ENCODE measurements at regions of chr1 and their contacts with region 1.

Region 1: DNA sequence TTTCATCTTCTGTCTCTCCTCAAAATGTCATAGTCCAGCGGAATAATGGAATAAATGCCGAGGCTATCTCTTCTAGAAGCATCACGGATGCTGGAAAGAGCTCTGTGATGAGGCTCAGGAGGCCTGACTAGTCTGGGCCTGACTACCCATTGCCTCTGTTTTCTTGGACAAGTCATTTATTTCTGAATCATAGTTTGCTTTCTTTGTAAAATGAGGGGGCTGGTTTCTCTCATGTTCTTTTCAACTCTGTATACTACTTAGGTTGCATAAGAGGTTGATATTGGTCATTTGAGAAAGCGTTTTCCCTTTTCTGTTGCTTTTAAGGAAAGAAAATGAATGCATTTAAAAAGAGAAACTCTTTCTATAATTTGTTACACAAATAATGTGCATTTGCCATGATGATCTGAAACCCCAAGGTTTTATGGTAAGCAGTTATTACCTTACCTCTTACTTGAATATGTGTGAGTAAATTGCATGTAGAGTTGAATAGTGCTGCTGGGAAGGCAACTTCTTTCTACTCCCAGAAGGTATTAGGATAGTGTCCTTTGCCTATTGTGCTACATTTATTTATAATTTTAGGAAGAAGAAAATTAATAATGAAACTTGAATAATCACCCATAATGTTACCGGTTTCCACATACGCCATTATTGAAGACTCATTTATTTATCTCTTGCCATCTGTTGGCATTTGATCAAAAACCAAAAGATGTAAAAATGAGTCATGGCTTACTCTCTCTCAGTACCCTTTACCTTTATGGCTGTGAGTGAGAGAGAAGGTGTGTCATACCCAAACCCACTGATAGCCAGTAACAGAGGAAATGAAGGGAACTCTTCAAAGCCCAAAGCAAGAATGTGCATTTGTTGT is 179.1 kb downstream of the FASLG start:
- DNase-seq: peak in 7 of 9 donors; percentile 47 to 78 (median 72)
- ATAC-seq: peak; percentile 99
- H3K4me3 ChIP-seq: no peak overlapping the region
- H3K4me3 Mint-ChIP-seq: peak overlapping the region in 9 of 10 donors; percentile 20 to 59 (median 41)
- H3K27ac ChIP-seq: no peak overlapping the region
- H3K27ac Mint-ChIP-seq: peak overlapping the region in 7 of 9 donors; percentile 63 to 92 (median 78)
- H3K4me1 ChIP-seq: peaks cover 12 to 16% of the 10 kb centered on the region in 2 donors
- H3K4me1 Mint-ChIP-seq: peaks cover 3 to 36% (median 28%) of the 10 kb centered on the region in 7 donors
- H3K27me3 ChIP-seq: no peaks in the 10 kb centered on the region
- H3K27me3 Mint-ChIP-seq: peaks cover 0 to 59% (median 0%) of the 10 kb centered on the region in 5 donors

Region 2: GRCh38 chr1:171883849-171884248 is 954.2 kb before region 1 on chr1:
- CTCF ChIA-PET with region 1: no interaction called
- POLR2A ChIA-PET with region 1: no interaction called
- intact Hi-C with region 1: no loop called
- DNase-seq: no peak
- ATAC-seq: no peak
- H3K4me3 ChIP-seq: no peak overlapping the region
- H3K4me3 Mint-ChIP-seq: peak overlapping the region in 2 of 10 donors; percentile 15 to 49
- H3K27ac ChIP-seq: no peak overlapping the region
- H3K27ac Mint-ChIP-seq: peak overlapping the region in 3 of 9 donors; percentile 16 to 62 (median 25)
- H3K4me1 ChIP-seq: no peaks in the 10 kb centered on the region
- H3K4me1 Mint-ChIP-seq: peaks cover 6 to 15% (median 9%) of the 10 kb centered on the region in 7 donors
- H3K27me3 ChIP-seq: no peaks in the 10 kb centered on the region
- H3K27me3 Mint-ChIP-seq: peaks cover 0 to 2% (median 0%) of the 10 kb centered on the region in 5 donors

Region 3: GRCh38 chr1:172818841-172819527 is 19.1 kb before region 1 on chr1:
- CTCF ChIA-PET with region 1: no interaction called
- POLR2A ChIA-PET with region 1: no interaction called
- intact Hi-C with region 1: loop called in 1 of 2 experiments (anchors 2 kb)
- DNase-seq: peak in 6 of 9 donors; percentile 7 to 44 (median 12)
- ATAC-seq: peak; percentile 81
- H3K4me3 ChIP-seq: peak overlapping the region; percentile 40
- H3K4me3 Mint-ChIP-seq: peak overlapping the region; percentile 63 to 79 (median 72)
- H3K27ac ChIP-seq: peak overlapping the region; percentile 53
- H3K27ac Mint-ChIP-seq: peak overlapping the region; percentile 76 to 93 (median 84)
- H3K4me1 ChIP-seq: peaks cover 6 to 17% of the 10 kb centered on the region in 2 donors
- H3K4me1 Mint-ChIP-seq: peaks cover 29 to 56% (median 36%) of the 10 kb centered on the region in 7 donors
- H3K27me3 ChIP-seq: no peaks in the 10 kb centered on the region
- H3K27me3 Mint-ChIP-seq: peaks cover 0 to 14% (median 0%) of the 10 kb centered on the region in 5 donors

Region 4: DNA sequence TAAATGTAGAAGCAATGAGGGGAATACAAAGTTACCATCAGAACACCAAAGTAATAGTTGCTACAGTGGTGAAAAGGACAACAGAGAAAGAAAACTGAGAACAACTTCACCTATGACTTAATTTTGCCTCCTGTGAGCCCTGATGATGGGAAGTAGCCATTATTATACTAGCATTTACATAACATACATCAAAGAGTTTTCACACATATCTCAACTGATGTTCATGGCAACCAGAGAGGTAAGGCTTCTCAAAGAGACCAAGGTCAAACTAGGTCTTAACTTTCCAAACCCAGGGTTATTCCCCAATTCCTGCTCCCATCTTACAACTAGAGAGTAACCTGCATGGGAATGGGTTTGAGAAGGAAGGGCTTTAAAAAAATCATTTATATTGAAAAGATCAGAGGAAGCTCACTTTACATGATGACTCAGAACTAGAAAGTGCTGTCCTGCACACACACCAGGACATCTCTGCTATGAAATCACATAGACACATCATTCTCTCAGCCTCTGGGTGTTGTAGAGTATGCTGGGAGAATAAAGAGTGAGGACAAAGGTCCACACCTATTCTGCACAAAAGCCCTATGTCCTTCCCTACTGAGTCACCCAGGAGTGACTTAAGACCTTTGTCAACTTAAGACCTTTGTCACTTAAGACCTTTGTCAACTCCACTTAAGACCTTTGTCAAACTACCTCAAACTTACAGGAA is 33.0 kb after region 1 on chr1:
- CTCF ChIA-PET with region 1: no interaction called
- POLR2A ChIA-PET with region 1: interaction called, 3 read pairs
- intact Hi-C with region 1: loop called (anchors 1 kb)
- DNase-seq: no peak
- ATAC-seq: no peak
- H3K4me3 ChIP-seq: no peak overlapping the region
- H3K4me3 Mint-ChIP-seq: no peak overlapping the region
- H3K27ac ChIP-seq: no peak overlapping the region
- H3K27ac Mint-ChIP-seq: no peak overlapping the region
- H3K4me1 ChIP-seq: peaks cover 0 to 9% of the 10 kb centered on the region in 2 donors
- H3K4me1 Mint-ChIP-seq: peaks cover 5 to 36% (median 26%) of the 10 kb centered on the region in 7 donors
- H3K27me3 ChIP-seq: no peaks in the 10 kb centered on the region
- H3K27me3 Mint-ChIP-seq: peaks cover 0 to 44% (median 0%) of the 10 kb centered on the region in 5 donors

Region 5: GRCh38 chr1:173392895-173393658 is 555.0 kb after region 1 on chr1:
- CTCF ChIA-PET with region 1: no interaction called
- POLR2A ChIA-PET with region 1: no interaction called
- intact Hi-C with region 1: no loop called
- DNase-seq: no peak
- ATAC-seq: no peak
- H3K4me3 ChIP-seq: no peak overlapping the region
- H3K4me3 Mint-ChIP-seq: no peak overlapping the region
- H3K27ac ChIP-seq: no peak overlapping the region
- H3K27ac Mint-ChIP-seq: no peak overlapping the region
- H3K4me1 ChIP-seq: no peaks in the 10 kb centered on the region
- H3K4me1 Mint-ChIP-seq: no peaks in the 10 kb centered on the region
- H3K27me3 ChIP-seq: no peaks in the 10 kb centered on the region
- H3K27me3 Mint-ChIP-seq: no peaks in the 10 kb centered on the region

Region 6: DNA sequence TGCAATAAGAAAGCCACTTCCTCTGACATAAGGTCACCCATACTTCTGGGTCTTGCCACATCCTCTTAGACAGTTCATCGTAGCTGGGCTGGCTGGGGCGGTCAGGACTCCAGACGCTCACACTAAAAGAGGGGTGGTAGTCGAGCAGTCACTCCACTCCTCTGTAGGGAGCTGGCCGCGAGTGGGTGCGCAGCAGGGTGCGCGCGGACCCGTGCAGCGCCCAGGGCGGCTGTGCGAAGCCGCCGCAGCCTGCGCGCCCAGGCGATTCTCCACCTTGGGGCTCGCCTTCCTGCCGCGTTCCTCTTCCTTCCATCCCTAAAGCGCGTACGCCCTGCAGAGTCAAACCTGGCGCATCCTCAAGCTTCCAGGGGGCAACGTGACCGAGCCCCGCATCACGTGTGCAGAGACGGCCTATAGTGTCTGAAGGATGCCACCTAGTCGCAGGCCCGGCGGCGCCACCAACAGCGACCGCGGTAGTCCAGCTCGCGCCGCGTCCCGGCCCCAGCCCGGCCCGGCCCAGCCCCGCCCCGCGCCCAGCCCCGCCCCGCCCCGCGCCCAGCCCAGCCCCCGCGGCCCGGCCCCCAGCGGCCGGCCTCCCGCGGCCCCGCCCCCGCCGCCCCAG is 638.7 kb after region 1 on chr1:
- CTCF ChIA-PET with region 1: no interaction called
- POLR2A ChIA-PET with region 1: no interaction called
- intact Hi-C with region 1: loop called in 1 of 2 experiments (anchors 1 kb)
- DNase-seq: peak; percentile 65 to 82 (median 78)
- ATAC-seq: peak; percentile 87
- H3K4me3 ChIP-seq: peak overlapping the region; percentile 92
- H3K4me3 Mint-ChIP-seq: peak overlapping the region; percentile 82 to 94 (median 91)
- H3K27ac ChIP-seq: peak overlapping the region; percentile 78
- H3K27ac Mint-ChIP-seq: peak overlapping the region; percentile 61 to 96 (median 89)
- H3K4me1 ChIP-seq: peaks cover 20 to 31% of the 10 kb centered on the region in 2 donors
- H3K4me1 Mint-ChIP-seq: peaks cover 38 to 72% (median 63%) of the 10 kb centered on the region in 7 donors
- H3K27me3 ChIP-seq: no peaks in the 10 kb centered on the region
- H3K27me3 Mint-ChIP-seq: no peaks in the 10 kb centered on the region